ENCODE measurements at regions of chr14 and their contacts with region 1.

Region 1: GRCh38 chr14:34059855-34060638 is 109.2 kb upstream of the EGLN3 start:
- DNase-seq: peak; percentile 21 to 88
- H3K4me3 ChIP-seq: peak overlapping the region; percentile 76 to 85
- H3K27ac ChIP-seq: peak overlapping the region; percentile 92 to 95
- H3K4me1 ChIP-seq: peaks cover 0 to 7% of the 10 kb centered on the region in 2 donors
- H3K27me3 ChIP-seq: no peaks in the 10 kb centered on the region
- CTCF ChIP-seq: peak in 2 of 3 experiments; percentile 34 to 35

Region 2: GRCh38 chr14:33914676-33915516 is 145.2 kb before region 1 on chr14:
- intact Hi-C with region 1: loop called (anchors 1 kb)
- DNase-seq: peak in 1 of 2 donors; percentile 74
- H3K4me3 ChIP-seq: no peak overlapping the region
- H3K27ac ChIP-seq: peak overlapping the region; percentile 34 to 66
- H3K4me1 ChIP-seq: peaks cover 0 to 14% of the 10 kb centered on the region in 2 donors
- H3K27me3 ChIP-seq: no peaks in the 10 kb centered on the region
- CTCF ChIP-seq: no peak

Region 3: DNA sequence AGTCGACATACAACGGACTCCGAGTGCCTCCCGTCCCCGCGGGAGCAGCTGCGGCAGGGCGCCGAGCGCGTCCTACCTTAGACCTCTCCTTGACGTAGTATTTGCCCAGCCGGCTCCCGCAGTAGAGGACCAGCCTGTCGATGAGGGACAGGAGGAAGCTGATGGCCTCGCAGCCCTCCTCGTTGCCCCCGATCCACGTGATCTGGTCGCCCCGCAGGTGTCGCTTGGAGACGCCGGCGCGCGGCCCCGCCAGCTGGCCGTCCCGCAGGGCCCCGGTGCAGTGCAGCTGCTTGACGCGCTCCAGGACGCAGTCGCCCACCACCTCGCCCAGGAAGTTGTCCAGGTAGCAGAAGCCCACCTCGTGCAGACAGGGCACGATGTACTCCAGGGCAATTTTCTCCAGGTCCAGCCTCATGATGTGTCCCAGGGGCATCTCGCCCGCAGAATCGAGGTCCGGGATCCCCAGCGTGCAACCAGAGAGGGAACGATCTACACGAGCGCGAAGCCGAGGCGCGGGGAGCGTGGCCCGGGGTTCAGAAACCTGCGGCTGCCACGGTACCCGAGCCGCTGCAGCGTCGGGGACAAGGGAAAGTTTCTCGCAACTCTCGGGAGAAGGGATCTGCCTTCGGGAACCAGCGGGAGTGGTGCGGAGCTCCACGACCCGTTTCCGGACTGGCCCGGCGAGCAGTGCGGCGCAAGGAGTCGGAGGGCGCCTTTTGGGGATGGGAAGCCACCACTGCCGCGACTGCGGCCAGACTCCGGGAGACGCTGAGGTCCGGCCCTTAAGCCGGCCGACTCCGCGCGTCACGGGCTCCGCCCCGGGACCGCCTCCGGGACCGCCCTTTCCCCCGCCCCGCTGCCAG is 109.5 kb before region 1 on chr14 and contains the start of gene EGLN3:
- intact Hi-C with region 1: loop called (anchors 2 kb)
- DNase-seq: peak; percentile 40 to 94
- H3K4me3 ChIP-seq: peak within 1 kb of the TSS; percentile 64 to 88
- H3K27ac ChIP-seq: peak within 1 kb of the TSS; percentile 78 to 79
- H3K4me1 ChIP-seq: peaks cover 0 to 8% of the 10 kb centered on the region in 2 donors
- H3K27me3 ChIP-seq: no peaks in the 10 kb centered on the region
- CTCF ChIP-seq: no peak
- total RNA-seq, gene EGLN3: 5.9 TPM

Region 4: GRCh38 chr14:33986804-33987203 is 73.2 kb before region 1 on chr14:
- intact Hi-C with region 1: loop called (anchors 2 kb)
- DNase-seq: no peak
- H3K4me3 ChIP-seq: no peak overlapping the region
- H3K27ac ChIP-seq: peak overlapping the region; percentile 42 to 45
- H3K4me1 ChIP-seq: no peaks in the 10 kb centered on the region
- H3K27me3 ChIP-seq: no peaks in the 10 kb centered on the region
- CTCF ChIP-seq: no peak

Region 5: GRCh38 chr14:34078117-34078743 is 18.2 kb after region 1 on chr14:
- intact Hi-C with region 1: no loop called
- DNase-seq: no peak
- H3K4me3 ChIP-seq: no peak overlapping the region
- H3K27ac ChIP-seq: no peak overlapping the region
- H3K4me1 ChIP-seq: peaks cover 0 to 12% of the 10 kb centered on the region in 2 donors
- H3K27me3 ChIP-seq: no peaks in the 10 kb centered on the region
- CTCF ChIP-seq: no peak

Region 6: DNA sequence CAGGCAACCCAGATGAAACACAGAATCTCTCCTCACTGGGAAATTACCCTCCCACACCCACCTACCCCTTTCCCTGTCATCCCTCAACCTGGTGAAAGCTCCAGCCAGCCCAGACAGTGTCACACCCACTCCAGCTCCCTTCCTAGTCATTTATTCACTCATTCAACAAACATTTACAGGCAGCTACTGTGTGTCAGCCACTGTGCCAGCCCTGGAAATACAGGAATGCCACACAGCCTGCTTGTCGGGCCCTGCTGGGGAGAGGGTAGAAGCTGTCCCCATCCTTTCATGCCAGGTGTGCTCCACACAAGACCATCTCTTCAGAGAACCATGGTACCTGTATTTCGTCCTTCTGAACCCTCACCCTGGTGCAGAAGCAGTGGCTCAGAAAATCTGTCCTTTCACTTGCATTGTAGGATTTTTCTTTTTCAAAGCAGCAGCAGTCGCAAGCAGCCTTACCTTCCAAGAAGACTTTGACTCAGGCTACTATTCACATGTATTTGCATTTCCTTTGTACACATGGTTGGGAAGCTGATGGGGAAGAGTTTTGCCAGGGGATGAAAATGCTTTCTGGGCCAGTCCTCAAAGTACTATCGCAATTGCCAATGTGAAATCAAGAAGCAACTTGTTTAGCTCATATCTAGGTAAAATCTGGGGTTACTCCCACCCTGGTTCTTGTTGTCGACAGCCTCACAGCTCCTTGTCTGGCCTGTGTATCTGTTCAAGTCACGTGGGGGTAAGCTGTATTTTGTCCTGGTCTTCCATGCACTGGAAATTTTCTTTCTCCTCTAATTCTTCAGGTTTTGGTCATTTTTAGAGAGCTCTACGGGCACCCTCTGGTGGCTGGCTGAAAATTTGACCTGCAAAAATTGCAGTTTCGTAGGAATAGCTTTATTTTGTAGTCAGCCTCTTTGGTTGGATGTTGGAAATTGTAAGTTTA is 38.3 kb after region 1 on chr14:
- intact Hi-C with region 1: loop called (anchors 2 kb)
- DNase-seq: no peak
- H3K4me3 ChIP-seq: no peak overlapping the region
- H3K27ac ChIP-seq: no peak overlapping the region
- H3K4me1 ChIP-seq: no peaks in the 10 kb centered on the region
- H3K27me3 ChIP-seq: no peaks in the 10 kb centered on the region
- CTCF ChIP-seq: peak; percentile 56 to 68 (median 59)